ENCODE measurements at regions of chr5 and their contacts with region 1.

Region 1: DNA sequence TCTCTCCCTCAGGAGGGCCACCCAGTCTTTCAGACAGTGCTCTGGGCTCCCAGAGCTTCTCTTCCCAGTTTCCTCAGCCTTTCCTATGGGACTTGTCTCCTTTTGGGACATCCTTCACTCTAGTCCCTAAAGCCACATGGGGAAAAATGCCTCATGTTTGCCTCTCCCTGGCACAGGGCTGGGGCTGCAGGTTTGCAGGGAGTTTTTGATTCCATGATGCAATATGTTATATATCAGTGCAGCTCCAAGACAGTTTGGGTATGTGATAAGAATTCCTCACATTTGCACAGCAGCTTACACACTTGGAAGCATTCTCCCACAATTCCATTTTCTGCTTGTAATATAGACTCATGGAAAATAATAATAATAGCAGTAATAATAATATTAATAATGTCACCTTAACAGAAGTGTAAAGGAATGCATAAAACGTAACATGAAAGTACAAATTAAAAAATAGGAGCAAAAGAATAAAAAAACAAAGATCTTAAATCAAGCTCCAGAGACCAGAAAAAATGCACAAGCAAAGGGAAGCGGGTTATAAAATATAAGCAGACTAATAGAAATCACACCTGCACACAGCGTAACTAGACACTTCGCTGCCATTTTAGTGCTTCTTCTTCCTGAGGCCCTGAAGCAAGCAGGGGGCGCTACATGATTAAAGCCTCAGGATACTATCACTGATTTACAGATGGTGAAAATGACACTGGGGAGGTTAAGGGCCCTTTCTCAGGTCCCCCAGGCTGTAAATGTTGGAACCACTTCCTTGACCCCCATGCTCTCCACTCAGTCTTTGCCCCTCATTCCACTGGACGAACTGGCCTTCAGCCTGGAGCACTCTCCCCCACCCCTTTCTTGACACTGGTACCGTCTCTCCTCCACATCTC is 70.0 kb upstream of the IL17B start:
- DNase-seq: no peak
- ATAC-seq: no peak

Region 2: GRCh38 chr5:149485655-149486425 is 36.8 kb after region 1 on chr5:
- intact Hi-C with region 1: loop called in 1 of 2 experiments (anchors 5 kb)
- DNase-seq: peak; percentile 88
- ATAC-seq: peak; percentile 80 to 90

Region 3: GRCh38 chr5:149628246-149628645 is 179.2 kb after region 1 on chr5:
- intact Hi-C with region 1: no loop called
- DNase-seq: no peak
- ATAC-seq: no peak

Measured in left cardiac atrium (tissue), 4 donors.